HepG2 (cell line): ENCODE measurements at regions of chr21 and their contacts with region 1.

Region 1: GRCh38 chr21:32278518-32279376 is at the start of gene MIS18A:
- DNase-seq: peak; percentile 89
- ATAC-seq: peak; percentile 94
- H3K4me3 ChIP-seq: peak within 1 kb of the TSS; percentile 87 to 92 (median 92)
- H3K27ac ChIP-seq: peak within 1 kb of the TSS; percentile 68
- H3K4me1 ChIP-seq: peaks cover 27% of the 10 kb centered on the region
- H3K27me3 ChIP-seq: no peaks in the 10 kb centered on the region
- CTCF ChIP-seq: peak; percentile 42
- EP300 ChIP-seq: no peak
- POLR2A ChIP-seq: peak; percentile 55 to 89; a peak in 3 of 4 replicates
- RAD21 ChIP-seq: peak; percentile 60; the same call in 1 of the 2 replicates
- total RNA-seq, gene MIS18A: 41.4 and 58.3 TPM in 2 replicates

Region 2: DNA sequence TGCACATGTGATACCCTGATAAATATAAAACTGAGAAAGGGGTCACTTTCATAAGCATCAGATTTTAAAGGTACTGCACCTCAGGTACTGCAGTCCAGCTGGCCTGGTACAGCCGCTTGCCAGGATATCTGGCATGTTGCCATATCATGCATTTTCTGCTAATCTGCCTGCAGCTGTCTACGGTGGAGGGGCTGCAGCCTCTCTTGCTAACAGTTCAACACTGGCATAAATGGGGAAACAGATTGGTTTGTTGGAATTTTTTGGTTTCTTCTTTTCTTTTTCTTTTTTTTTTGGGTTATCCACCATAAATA is 71.4 kb before region 1 on chr21:
- CTCF ChIA-PET with region 1: no interaction called
- POLR2A ChIA-PET with region 1: no interaction called
- in situ Hi-C with region 1: no loop called
- intact Hi-C with region 1: loop called (anchors 2 kb)
- DNase-seq: no peak
- ATAC-seq: no peak
- H3K4me3 ChIP-seq: no peak overlapping the region
- H3K27ac ChIP-seq: no peak overlapping the region
- H3K4me1 ChIP-seq: no peaks in the 10 kb centered on the region
- H3K27me3 ChIP-seq: no peaks in the 10 kb centered on the region; a peak in 1 of 5 replicates
- CTCF ChIP-seq: no peak
- EP300 ChIP-seq: no peak
- POLR2A ChIP-seq: no peak
- RAD21 ChIP-seq: no peak

Region 3: GRCh38 chr21:32336711-32337110 is 58.0 kb after region 1 on chr21:
- CTCF ChIA-PET with region 1: no interaction called
- POLR2A ChIA-PET with region 1: no interaction called
- in situ Hi-C with region 1: no loop called
- intact Hi-C with region 1: loop called (anchors 10 kb)
- DNase-seq: no peak
- ATAC-seq: no peak
- H3K4me3 ChIP-seq: no peak overlapping the region
- H3K27ac ChIP-seq: no peak overlapping the region
- H3K4me1 ChIP-seq: peaks cover 19% of the 10 kb centered on the region
- H3K27me3 ChIP-seq: no peaks in the 10 kb centered on the region
- CTCF ChIP-seq: no peak
- EP300 ChIP-seq: no peak
- POLR2A ChIP-seq: no peak
- RAD21 ChIP-seq: no peak